CD4-positive, alpha-beta memory T cell (primary cell): ENCODE measurements at regions of chr1 and their contacts with region 1.

Region 1: DNA sequence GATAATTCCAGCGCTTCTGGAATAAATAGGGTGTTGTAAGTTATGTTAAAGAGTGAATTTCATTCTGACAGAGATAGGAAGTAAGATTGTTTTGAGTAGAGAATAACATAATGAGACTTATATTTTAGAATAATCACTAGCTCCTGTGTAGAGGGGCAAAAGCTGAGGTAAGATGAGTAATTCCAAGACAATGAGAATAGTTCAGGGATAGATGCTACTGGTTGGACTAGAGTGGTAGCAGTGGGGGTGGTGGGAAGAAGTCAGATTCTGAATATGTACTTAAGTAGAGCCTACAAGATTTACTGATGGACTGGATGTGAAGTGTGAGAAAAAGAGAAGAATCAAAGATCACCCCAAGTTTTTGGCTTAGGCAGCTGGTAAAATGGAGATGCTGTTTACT is 23.3 kb upstream of the MOV10 start:
- DNase-seq: no peak
- H3K4me3 ChIP-seq: no peak overlapping the region
- H3K4me3 Mint-ChIP-seq: no peak overlapping the region
- H3K27ac ChIP-seq: no peak overlapping the region
- H3K27ac Mint-ChIP-seq: peak overlapping the region; percentile 6 to 93 (median 32)
- H3K4me1 ChIP-seq: peaks cover 11% of the 10 kb centered on the region
- H3K4me1 Mint-ChIP-seq: peaks cover 15 to 30% (median 22%) of the 10 kb centered on the region in 4 donors
- H3K27me3 ChIP-seq: no peaks in the 10 kb centered on the region
- H3K27me3 Mint-ChIP-seq: no peaks in the 10 kb centered on the region

Region 2: GRCh38 chr1:112263453-112263852 is 387.8 kb before region 1 on chr1:
- CTCF ChIA-PET with region 1: no interaction called
- POLR2A ChIA-PET with region 1: no interaction called
- intact Hi-C with region 1: no loop called
- DNase-seq: no peak
- H3K4me3 ChIP-seq: no peak overlapping the region
- H3K4me3 Mint-ChIP-seq: no peak overlapping the region
- H3K27ac ChIP-seq: no peak overlapping the region
- H3K27ac Mint-ChIP-seq: no peak overlapping the region
- H3K4me1 ChIP-seq: no peaks in the 10 kb centered on the region
- H3K4me1 Mint-ChIP-seq: no peaks in the 10 kb centered on the region
- H3K27me3 ChIP-seq: no peaks in the 10 kb centered on the region
- H3K27me3 Mint-ChIP-seq: peaks cover 5 to 6% of the 10 kb centered on the region in 2 donors

Region 3: GRCh38 chr1:112605633-112606327 is 45.4 kb before region 1 on chr1:
- CTCF ChIA-PET with region 1: no interaction called
- POLR2A ChIA-PET with region 1: no interaction called
- intact Hi-C with region 1: no loop called
- DNase-seq: no peak
- H3K4me3 ChIP-seq: no peak overlapping the region
- H3K4me3 Mint-ChIP-seq: no peak overlapping the region
- H3K27ac ChIP-seq: no peak overlapping the region
- H3K27ac Mint-ChIP-seq: peak overlapping the region in 2 of 7 donors; percentile 53 to 70
- H3K4me1 ChIP-seq: no peaks in the 10 kb centered on the region
- H3K4me1 Mint-ChIP-seq: peaks cover 2 to 6% (median 5%) of the 10 kb centered on the region in 4 donors
- H3K27me3 ChIP-seq: no peaks in the 10 kb centered on the region
- H3K27me3 Mint-ChIP-seq: no peaks in the 10 kb centered on the region

Region 4: GRCh38 chr1:112637254-112638116 is 13.7 kb before region 1 on chr1:
- CTCF ChIA-PET with region 1: no interaction called
- POLR2A ChIA-PET with region 1: interaction called, 3 read pairs
- intact Hi-C with region 1: loop called (anchors 2 kb)
- DNase-seq: no peak
- H3K4me3 ChIP-seq: no peak overlapping the region
- H3K4me3 Mint-ChIP-seq: peak overlapping the region in 4 of 8 donors; percentile 23 to 66 (median 54)
- H3K27ac ChIP-seq: peak overlapping the region; percentile 11
- H3K27ac Mint-ChIP-seq: peak overlapping the region; percentile 36 to 91 (median 80)
- H3K4me1 ChIP-seq: peaks cover 66% of the 10 kb centered on the region
- H3K4me1 Mint-ChIP-seq: peaks cover 40 to 75% (median 54%) of the 10 kb centered on the region in 4 donors
- H3K27me3 ChIP-seq: no peaks in the 10 kb centered on the region
- H3K27me3 Mint-ChIP-seq: no peaks in the 10 kb centered on the region